ENCODE measurements at regions of chr19 and their contacts with region 1.

Region 1: DNA sequence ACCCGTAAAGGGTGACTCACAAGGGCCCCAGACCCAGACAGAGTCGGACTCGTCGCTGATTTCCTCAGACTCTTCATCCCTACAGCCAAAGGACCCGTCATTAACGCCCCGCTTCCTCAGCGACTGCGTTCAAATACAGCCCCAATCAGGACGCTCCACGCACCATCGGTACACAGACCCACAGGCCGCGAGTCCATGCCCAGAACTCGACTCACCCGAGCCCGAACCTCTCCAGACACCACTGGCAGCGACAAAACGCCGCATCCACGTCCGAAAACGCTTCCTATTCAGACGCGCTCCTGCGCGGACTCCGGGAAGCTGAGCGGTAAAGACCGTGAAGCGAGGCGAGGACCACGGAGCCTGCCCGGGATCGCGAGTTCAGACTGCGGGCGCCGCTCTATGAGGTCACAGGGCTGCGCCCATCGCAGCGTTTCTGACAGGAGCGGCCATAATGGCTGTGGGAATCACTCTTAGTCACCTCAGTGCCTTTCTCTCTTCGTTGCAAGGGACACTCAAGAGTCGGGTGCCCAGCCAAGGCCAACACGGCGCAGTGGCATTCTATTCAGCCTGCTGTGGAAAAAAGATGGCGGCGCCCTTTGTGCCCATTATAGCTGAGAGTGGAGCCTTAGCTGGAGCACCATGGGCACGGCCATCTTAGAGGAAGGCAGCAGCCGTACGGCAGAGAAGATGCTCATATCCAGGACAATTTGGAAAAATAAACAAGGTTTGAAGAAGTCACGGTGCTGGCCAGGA is at the start of gene ZNF614:
- DNase-seq: peak; percentile 96
- H3K4me3 Mint-ChIP-seq: peak within 1 kb of the TSS; percentile 94
- H3K27ac Mint-ChIP-seq: peak within 1 kb of the TSS; percentile 95
- H3K4me1 Mint-ChIP-seq: peaks cover 15% of the 10 kb centered on the region
- H3K27me3 Mint-ChIP-seq: no peaks in the 10 kb centered on the region
- total RNA-seq, gene ZNF614: 11.0 and 12.7 TPM in 2 replicates

Region 2: GRCh38 chr19:52007806-52008557 is 20.2 kb before region 1 on chr19 and contains the start of gene ZNF615:
- intact Hi-C with region 1: loop called (anchors 1 kb)
- DNase-seq: peak; percentile 96
- H3K4me3 Mint-ChIP-seq: peak within 1 kb of the TSS; percentile 91
- H3K27ac Mint-ChIP-seq: peak within 1 kb of the TSS; percentile 98
- H3K4me1 Mint-ChIP-seq: peaks cover 14% of the 10 kb centered on the region
- H3K27me3 Mint-ChIP-seq: no peaks in the 10 kb centered on the region
- total RNA-seq, gene ZNF615: 5.9 and 6.9 TPM in 2 replicates